Activated CD4-positive, alpha-beta T cell treated with anti-CD3 and anti-CD28 coated beads, Interleukin-2, amount 10 ng/mL, durations not matched to agents 24 days and 14 days (primary cell): ENCODE measurements at regions of chr5 and their contacts with region 1.

Region 1: DNA sequence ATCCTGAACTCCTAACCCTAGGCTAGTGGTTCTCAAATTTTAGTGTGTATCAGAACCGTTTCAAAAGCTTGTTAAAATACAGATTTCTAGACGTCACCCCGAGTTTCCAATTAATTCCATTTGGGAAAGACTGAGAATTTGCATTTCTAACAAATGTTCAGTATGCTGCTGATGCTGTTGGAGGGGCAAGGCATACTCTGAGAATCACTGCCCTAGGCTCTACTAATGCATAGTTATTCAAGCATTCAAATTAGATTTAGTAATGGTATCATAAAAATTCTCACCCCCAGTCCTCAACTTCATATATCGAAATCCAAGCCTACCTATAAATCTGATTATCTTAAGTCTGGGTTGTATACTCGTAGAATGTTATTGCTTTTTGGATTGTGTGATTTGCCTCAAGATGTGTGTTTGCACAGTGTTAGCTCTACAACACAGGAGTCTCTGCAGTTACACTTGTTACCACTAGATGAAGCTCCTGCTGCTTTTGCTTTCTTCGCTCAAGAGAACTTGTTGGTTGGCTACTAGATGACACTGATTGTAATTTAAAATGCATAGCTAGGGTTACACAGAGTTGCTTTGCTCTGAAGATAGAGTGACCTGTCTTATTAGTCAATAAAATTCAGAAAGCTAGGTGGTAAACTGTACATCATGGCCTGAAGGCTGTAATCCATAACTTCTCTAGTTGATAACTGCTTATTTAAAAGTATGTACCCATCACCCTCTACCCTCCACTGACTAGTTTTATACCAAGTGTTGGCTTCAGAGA is 7.5 kb upstream of the ERAP2 start:
- DNase-seq: peak; percentile 84
- H3K4me3 Mint-ChIP-seq: no peak overlapping the region
- H3K27ac Mint-ChIP-seq: peak overlapping the region; percentile 13
- H3K4me1 Mint-ChIP-seq: peaks cover 54% of the 10 kb centered on the region
- H3K27me3 Mint-ChIP-seq: no peaks in the 10 kb centered on the region

Region 2: GRCh38 chr5:96790961-96791504 is 77.8 kb before region 1 on chr5:
- intact Hi-C with region 1: no loop called
- DNase-seq: peak; percentile 47
- H3K4me3 Mint-ChIP-seq: no peak overlapping the region
- H3K27ac Mint-ChIP-seq: no peak overlapping the region
- H3K4me1 Mint-ChIP-seq: peaks cover 16% of the 10 kb centered on the region
- H3K27me3 Mint-ChIP-seq: no peaks in the 10 kb centered on the region

Region 3: DNA sequence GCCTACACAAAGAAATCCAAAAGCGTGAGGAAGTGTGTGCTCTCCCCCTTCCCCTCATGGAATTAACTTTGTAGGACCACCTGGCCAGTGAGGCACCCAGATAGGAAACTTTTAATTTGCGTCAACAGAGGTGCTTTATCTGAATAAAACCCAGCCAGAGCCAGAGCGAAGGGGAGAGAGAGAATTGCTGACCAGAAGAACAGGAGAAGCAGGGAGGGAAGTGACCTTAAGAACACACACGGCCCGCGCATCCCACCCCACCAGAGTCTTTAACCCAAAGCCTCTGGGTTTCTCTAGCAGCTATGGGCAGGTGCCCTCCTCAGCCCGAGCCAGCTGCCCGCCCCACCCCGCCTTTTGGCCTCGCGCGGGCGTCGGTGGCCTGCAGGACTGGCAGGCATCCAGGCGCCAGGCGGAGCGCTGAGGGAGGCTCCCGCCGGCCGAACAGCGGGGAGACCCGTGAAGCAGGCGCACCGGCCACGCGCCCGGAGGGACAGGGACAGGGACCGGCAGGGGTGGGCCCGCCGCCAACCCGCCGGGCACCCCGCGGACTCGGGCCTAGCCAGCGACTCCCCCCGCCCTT is 61.6 kb before region 1 on chr5:
- intact Hi-C with region 1: loop called (anchors 1 kb)
- DNase-seq: peak; percentile 86
- H3K4me3 Mint-ChIP-seq: peak overlapping the region; percentile 90
- H3K27ac Mint-ChIP-seq: peak overlapping the region; percentile 94
- H3K4me1 Mint-ChIP-seq: peaks cover 60% of the 10 kb centered on the region
- H3K27me3 Mint-ChIP-seq: no peaks in the 10 kb centered on the region

Region 4: DNA sequence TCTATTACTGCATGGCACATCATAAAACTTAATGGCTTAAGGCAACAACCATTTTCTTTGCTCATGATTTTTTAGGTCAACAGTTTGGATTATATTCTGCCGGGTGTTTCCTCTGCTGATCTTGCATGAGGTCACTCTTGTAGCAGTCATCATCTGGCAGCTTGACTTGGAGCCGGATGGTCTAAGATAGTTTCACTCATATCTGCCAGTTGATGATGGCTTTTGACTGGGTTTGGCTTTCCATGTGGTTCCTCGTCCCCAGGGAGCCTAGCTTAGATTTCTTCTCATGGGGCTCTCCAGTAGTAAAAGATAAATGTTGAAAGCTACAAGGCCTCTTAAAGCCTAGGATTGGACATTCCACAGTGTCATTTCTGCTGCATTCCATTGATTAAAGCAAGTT is 94.5 kb after region 1 on chr5:
- intact Hi-C with region 1: loop called (anchors 1 kb)
- DNase-seq: peak; percentile 68
- H3K4me3 Mint-ChIP-seq: peak overlapping the region; percentile 79
- H3K27ac Mint-ChIP-seq: peak overlapping the region; percentile 92
- H3K4me1 Mint-ChIP-seq: peaks cover 58% of the 10 kb centered on the region
- H3K27me3 Mint-ChIP-seq: no peaks in the 10 kb centered on the region

Region 5: DNA sequence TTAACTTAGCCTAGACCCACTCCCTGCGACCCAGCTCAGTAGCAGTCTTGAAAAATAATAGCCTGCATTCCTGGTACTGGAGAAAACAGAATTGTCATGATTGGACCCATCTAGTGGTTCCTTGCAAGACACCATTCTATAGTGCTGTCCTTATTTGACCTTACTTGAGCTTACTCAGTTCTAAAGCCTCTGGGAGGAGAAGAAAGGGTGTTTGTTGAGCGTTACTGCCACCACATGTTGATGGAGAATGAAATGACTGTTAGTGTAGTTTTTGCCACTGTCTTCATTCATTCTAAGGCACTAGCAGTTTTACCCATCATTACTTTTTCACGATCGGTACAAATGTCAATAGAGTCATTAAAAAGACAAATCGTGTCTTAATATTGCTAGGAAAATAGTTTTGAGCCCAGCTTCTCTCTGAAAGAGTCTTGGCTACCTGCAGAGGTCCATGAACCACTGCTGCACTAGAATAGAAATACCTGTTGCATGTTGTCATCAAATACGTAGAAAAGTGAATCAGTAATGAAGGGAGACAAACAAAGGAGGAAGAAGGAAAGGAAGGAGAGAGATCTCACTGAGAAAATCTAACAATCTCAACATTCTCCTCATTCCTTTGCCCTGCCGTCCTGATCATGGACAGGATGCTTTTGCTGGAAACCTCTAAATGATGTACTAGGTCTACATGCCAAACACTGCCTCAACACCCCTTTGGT is 177.6 kb after region 1 on chr5:
- intact Hi-C with region 1: loop called (anchors 5 kb)
- DNase-seq: no peak
- H3K4me3 Mint-ChIP-seq: no peak overlapping the region
- H3K27ac Mint-ChIP-seq: no peak overlapping the region
- H3K4me1 Mint-ChIP-seq: peaks cover 4% of the 10 kb centered on the region
- H3K27me3 Mint-ChIP-seq: peaks cover 22% of the 10 kb centered on the region

Region 6: DNA sequence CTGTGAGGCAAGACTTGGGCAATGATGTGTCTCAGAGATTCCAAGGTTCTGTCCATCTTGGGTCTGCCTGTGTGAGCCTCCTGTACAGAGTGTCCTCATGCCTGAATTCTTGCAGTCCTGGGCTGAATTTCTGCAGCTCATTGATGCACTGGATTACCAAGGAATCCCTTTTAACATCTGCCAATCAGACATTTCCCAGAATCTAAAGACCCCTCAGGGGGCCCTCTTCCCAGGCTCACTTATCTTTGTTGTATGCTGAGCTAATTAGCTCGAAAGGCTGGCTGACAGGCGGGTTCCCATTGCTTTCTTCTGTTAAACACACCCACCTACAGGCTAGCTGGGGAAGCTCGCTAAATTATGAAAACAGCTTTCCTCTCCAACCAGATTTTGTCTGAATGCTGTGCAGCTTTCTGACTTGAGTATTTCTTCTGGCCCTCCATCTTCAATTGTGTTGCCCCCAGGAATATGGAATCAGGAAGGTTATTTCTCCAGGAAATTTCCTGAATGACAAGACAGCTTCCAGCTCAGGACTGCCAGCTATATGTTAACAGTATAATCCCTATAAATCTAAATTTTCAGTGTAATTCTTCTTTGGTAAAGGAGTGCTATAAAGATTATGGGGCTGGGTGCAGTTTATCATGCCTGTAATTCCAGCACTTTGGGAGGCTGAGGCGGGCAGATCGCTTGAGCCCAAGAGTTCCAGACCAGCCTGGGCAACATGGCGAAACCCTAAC is 273.9 kb after region 1 on chr5 and contains the start of gene LIX1:
- intact Hi-C with region 1: loop called (anchors 5 kb)
- DNase-seq: peak; percentile 78
- H3K4me3 Mint-ChIP-seq: no peak within 1 kb of the TSS
- H3K27ac Mint-ChIP-seq: no peak within 1 kb of the TSS
- H3K4me1 Mint-ChIP-seq: no peaks in the 10 kb centered on the region
- H3K27me3 Mint-ChIP-seq: peaks cover 32% of the 10 kb centered on the region
- total RNA-seq, gene LIX1: not detected in 2 replicates